Caco-2 (cell line): ENCODE measurements at regions of chr14 and their contacts with region 1.

Region 1: GRCh38 chr14:103802356-103802755 is 45.0 kb downstream of the PPP1R13B start:
- DNase-seq: no peak
- H3K4me3 ChIP-seq: no peak overlapping the region
- H3K4me3 Mint-ChIP-seq: no peak overlapping the region
- H3K27ac Mint-ChIP-seq: no peak overlapping the region
- H3K4me1 ChIP-seq: no peaks in the 10 kb centered on the region
- H3K4me1 Mint-ChIP-seq: peaks cover 8% of the 10 kb centered on the region
- H3K27me3 ChIP-seq: no peaks in the 10 kb centered on the region
- H3K27me3 Mint-ChIP-seq: no peaks in the 10 kb centered on the region
- CTCF ChIP-seq: no peak

Region 2: DNA sequence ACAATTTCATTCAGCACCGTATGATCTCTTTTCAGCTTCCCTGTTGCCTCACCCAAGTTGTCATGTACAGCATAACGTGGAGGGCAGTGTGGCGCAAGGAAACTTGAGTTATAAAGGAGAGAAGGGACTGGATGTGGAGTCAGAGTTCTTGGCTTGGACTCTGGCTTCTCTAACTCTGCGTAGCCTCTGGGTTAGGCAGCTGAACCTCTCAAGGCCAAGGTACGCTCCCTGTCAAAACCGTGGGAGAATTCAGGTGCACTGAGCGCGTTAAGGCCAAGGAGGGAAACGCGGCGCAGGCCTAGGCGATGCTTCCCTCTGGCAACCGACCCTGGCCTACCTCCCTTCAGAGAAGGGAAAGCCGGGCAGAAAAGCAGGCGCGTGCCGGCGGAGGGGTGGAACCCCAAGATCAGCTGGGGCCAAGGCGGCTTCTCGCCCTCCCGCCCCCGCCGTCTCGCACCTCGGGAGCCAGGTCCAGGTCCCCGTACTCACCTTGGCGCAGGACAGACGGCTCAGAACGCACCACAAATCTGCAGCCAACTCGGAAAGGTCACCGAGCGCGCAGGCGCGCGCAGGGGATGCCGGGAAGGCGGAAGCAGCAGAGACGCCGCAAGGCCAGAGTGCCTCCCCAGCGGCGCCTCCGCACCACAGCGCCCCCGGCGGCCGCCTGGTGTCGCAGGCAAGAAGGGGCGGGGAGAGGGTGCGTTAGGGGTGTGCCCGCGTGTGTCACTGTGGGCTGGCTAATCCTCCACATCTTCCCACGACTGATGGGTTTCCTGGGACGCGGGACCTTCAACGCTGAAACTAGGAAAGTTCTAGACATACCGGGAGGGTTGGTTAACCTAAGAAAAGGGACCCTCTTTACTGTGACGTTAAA is 118.9 kb after region 1 on chr14:
- CTCF ChIA-PET with region 1: no interaction called
- POLR2A ChIA-PET with region 1: interaction called, 15 read pairs
- intact Hi-C with region 1: no loop called
- DNase-seq: peak; percentile 92 to 96
- H3K4me3 ChIP-seq: peak overlapping the region; percentile 73
- H3K4me3 Mint-ChIP-seq: peak overlapping the region; percentile 94
- H3K27ac Mint-ChIP-seq: peak overlapping the region; percentile 91
- H3K4me1 ChIP-seq: no peaks in the 10 kb centered on the region
- H3K4me1 Mint-ChIP-seq: no peaks in the 10 kb centered on the region
- H3K27me3 ChIP-seq: no peaks in the 10 kb centered on the region
- H3K27me3 Mint-ChIP-seq: no peaks in the 10 kb centered on the region
- CTCF ChIP-seq: peak; percentile 90 to 96